ENCODE measurements at regions of chr13 and their contacts with region 1.

Region 1: DNA sequence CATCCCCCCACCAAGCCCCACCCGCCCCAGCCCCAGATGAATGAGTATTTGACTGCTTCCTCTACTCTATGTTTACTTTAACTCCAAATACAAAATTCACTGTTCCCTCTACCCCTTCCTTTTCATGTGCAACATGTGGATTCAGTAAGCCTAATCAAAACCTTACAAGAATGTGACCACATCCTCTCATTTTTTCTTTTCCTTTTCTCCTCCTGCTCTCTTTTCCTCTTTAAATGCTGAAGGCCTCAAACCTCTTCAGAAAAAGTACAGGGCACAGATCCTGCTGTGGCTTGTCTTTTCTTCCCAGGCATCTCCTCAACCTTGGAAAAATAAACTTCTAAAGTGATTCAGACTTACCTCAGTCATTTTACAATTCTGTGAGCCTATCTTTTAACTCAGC is 119.0 kb downstream of the MYCBP2 start:
- DNase-seq: no peak
- ATAC-seq: no peak
- H3K4me3 ChIP-seq: no peak overlapping the region
- H3K4me3 Mint-ChIP-seq: no peak overlapping the region
- H3K27ac ChIP-seq: peak overlapping the region in 1 of 2 experiments; percentile 8
- H3K27ac Mint-ChIP-seq: peak overlapping the region; percentile 63
- H3K4me1 ChIP-seq: peaks cover 10% of the 10 kb centered on the region
- H3K4me1 Mint-ChIP-seq: peaks cover 19% of the 10 kb centered on the region
- H3K27me3 ChIP-seq: no peaks in the 10 kb centered on the region
- H3K27me3 Mint-ChIP-seq: no peaks in the 10 kb centered on the region
- CTCF ChIP-seq: no peak

Region 2: DNA sequence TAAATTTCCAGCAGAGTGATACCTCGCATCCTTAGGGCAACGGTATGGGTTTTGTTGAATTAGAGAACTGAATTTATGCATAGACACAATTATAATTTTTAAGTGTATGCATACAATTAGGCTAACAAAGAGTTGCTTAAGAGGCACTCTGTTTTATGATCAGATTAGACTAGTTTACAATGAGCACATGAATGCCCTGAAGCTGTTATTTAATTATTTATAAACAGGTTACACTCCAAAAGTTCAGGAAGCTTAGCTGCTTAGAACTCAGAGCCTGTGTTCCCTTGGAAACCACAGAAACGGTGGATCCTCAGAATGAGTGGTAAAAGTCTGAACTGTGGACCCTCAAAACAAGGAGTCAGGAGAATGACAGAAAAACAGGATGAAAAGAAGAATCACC is 108.5 kb before region 1 on chr13:
- CTCF ChIA-PET with region 1: no interaction called
- POLR2A ChIA-PET with region 1: no interaction called
- intact Hi-C with region 1: no loop called
- DNase-seq: no peak
- ATAC-seq: no peak
- H3K4me3 ChIP-seq: no peak overlapping the region
- H3K4me3 Mint-ChIP-seq: no peak overlapping the region
- H3K27ac ChIP-seq: no peak overlapping the region
- H3K27ac Mint-ChIP-seq: no peak overlapping the region
- H3K4me1 ChIP-seq: no peaks in the 10 kb centered on the region
- H3K4me1 Mint-ChIP-seq: no peaks in the 10 kb centered on the region
- H3K27me3 ChIP-seq: no peaks in the 10 kb centered on the region
- H3K27me3 Mint-ChIP-seq: no peaks in the 10 kb centered on the region
- CTCF ChIP-seq: no peak

Region 3: GRCh38 chr13:77222000-77222690 is 14.2 kb after region 1 on chr13:
- CTCF ChIA-PET with region 1: no interaction called
- POLR2A ChIA-PET with region 1: no interaction called
- intact Hi-C with region 1: loop called in 1 of 2 experiments (anchors 2 kb)
- DNase-seq: no peak
- ATAC-seq: no peak
- H3K4me3 ChIP-seq: no peak overlapping the region
- H3K4me3 Mint-ChIP-seq: no peak overlapping the region
- H3K27ac ChIP-seq: no peak overlapping the region
- H3K27ac Mint-ChIP-seq: peak overlapping the region; percentile 35
- H3K4me1 ChIP-seq: no peaks in the 10 kb centered on the region
- H3K4me1 Mint-ChIP-seq: peaks cover 30% of the 10 kb centered on the region
- H3K27me3 ChIP-seq: no peaks in the 10 kb centered on the region
- H3K27me3 Mint-ChIP-seq: no peaks in the 10 kb centered on the region
- CTCF ChIP-seq: no peak

Region 4: DNA sequence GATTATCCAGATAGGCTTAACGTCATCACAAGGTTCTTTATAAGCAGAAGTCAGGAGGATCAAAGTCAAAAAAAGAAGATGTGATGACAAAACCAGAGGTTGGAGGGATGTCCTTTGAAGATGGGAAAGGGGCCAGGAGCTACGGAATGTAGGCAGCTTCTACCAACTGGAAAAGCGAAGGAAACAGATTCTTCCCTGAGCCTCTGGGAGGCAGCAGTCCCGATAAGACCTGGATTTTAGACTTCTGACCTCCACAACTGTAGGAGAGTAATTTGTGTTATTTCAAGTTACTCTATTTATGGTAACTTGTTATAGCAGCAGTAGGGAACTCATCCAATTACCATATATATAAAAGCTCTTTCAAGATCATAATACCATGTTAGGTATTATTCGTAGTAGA is 217.8 kb after region 1 on chr13:
- CTCF ChIA-PET with region 1: no interaction called
- POLR2A ChIA-PET with region 1: no interaction called
- intact Hi-C with region 1: no loop called
- DNase-seq: no peak
- ATAC-seq: no peak
- H3K4me3 ChIP-seq: no peak overlapping the region
- H3K4me3 Mint-ChIP-seq: no peak overlapping the region
- H3K27ac ChIP-seq: no peak overlapping the region
- H3K27ac Mint-ChIP-seq: no peak overlapping the region
- H3K4me1 ChIP-seq: no peaks in the 10 kb centered on the region
- H3K4me1 Mint-ChIP-seq: no peaks in the 10 kb centered on the region
- H3K27me3 ChIP-seq: no peaks in the 10 kb centered on the region
- H3K27me3 Mint-ChIP-seq: no peaks in the 10 kb centered on the region
- CTCF ChIP-seq: no peak